Ovary (tissue), 10 donors: ENCODE measurements at regions of chr1 and their contacts with region 1.

Region 1: DNA sequence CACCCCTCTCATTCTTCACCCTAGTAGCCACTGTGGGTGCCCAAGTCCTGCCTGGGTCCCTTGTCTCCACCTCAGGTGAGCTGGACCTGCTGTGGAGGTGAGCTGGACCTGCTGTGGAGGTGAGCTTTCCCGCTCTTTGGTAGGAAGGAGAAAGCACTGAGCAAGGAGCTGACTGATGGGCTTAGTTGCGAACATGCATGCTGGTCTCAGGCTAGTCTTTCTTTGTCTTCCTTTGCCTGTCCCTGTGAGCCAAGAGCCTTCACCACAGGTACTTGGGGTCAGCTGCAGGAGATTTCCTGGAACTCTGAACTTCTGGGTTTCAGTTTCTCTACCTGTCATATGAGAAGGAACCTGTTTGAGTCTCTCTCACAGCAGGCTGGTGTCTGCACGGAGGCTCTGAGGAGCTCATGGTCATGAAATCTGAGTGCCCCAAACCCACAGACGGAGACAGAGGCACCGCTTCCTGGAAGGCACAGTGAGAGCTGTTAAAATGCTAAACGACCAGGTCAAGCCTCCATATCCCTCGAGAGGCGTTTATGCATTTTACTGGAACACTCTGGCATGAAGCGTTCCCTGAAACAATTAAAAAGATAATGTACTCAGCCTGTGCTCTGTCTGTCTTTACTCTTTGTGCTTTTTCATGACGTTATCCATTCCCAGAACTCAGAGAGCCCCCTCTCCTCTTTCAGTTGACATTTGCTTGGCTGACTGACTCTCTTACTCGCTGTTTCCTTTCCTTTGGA is 69.6 kb downstream of the RHOU start:
- DNase-seq: peak in 1 of 5 donors; percentile 52
- H3K4me3 ChIP-seq: no peak overlapping the region
- H3K27ac ChIP-seq: no peak overlapping the region
- H3K4me1 ChIP-seq: peaks cover 8% of the 10 kb centered on the region
- H3K27me3 ChIP-seq: no peaks in the 10 kb centered on the region
- CTCF ChIP-seq: no peak
- EP300 ChIP-seq: no peak
- POLR2A ChIP-seq: no peak

Region 2: DNA sequence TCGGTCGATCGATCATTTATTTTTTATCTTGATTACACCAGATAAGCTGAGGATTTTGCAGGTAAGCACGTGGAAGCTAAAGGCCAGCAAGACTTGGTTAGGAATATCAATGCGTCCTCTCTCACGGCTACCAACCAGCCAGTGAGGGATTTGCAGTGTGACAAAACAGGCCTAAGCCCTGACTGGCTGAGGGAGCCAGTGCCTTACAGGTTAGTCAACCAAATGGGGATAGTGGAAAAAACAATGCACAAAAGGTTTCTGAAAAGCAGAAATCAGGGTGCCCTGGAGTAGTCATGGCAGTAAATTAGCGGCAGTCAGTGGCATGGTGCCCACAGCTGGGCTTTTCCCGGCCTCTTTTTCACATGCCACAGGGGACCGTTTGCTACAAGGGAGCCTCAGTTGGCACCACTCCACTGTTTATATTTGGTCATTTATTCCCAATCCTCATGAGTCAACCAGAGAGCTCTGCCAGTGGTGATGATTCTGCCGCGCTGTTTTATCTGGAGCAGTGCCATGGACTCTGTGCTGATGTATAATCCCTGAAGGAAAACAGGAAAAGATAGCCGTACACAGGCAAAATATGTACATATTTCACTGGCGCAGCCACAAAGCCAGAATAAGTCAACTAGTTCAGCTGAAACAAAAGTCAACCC is 98.1 kb after region 1 on chr1:
- intact Hi-C with region 1: loop called in 1 of 4 experiments (anchors 10 kb)
- DNase-seq: peak; percentile 88 to 93 (median 89)
- H3K4me3 ChIP-seq: no peak overlapping the region
- H3K27ac ChIP-seq: peak overlapping the region; percentile 28 to 65
- H3K4me1 ChIP-seq: peaks cover 15% of the 10 kb centered on the region
- H3K27me3 ChIP-seq: no peaks in the 10 kb centered on the region
- CTCF ChIP-seq: no peak
- EP300 ChIP-seq: no peak
- POLR2A ChIP-seq: no peak

Region 3: DNA sequence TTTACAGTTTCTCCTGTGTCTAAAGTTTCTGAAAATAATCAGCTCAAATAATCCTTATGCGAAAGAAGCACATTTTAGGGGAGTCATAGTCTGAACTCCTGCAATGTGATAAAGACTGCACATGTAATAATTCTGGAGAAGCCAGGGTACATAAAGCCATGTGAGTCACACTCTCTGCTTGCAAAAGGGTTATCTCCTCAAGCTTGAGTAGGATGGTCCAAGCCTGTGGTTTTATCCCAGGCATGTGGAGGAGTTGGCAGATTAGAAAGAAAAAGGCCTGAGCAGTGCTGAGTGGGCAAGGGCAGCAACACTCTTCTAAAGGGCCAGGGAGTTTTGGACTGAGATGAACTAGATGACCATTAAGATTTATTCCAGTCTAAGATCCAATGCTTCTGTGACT is 150.8 kb after region 1 on chr1:
- intact Hi-C with region 1: loop called in 2 of 4 experiments (anchors 5 to 10 kb)
- DNase-seq: no peak
- H3K4me3 ChIP-seq: no peak overlapping the region
- H3K27ac ChIP-seq: no peak overlapping the region
- H3K4me1 ChIP-seq: no peaks in the 10 kb centered on the region
- H3K27me3 ChIP-seq: no peaks in the 10 kb centered on the region
- CTCF ChIP-seq: no peak
- EP300 ChIP-seq: no peak
- POLR2A ChIP-seq: no peak

Region 4: GRCh38 chr1:228964178-228965089 is 159.6 kb after region 1 on chr1:
- intact Hi-C with region 1: loop called in 2 of 4 experiments (anchors 5 to 10 kb)
- DNase-seq: peak; percentile 50 to 82 (median 65)
- H3K4me3 ChIP-seq: no peak overlapping the region
- H3K27ac ChIP-seq: peak overlapping the region; percentile 57 to 70
- H3K4me1 ChIP-seq: peaks cover 7% of the 10 kb centered on the region
- H3K27me3 ChIP-seq: no peaks in the 10 kb centered on the region
- CTCF ChIP-seq: no peak
- EP300 ChIP-seq: no peak
- POLR2A ChIP-seq: no peak

Region 5: GRCh38 chr1:229227298-229227919 is 422.6 kb after region 1 on chr1:
- intact Hi-C with region 1: loop called in 1 of 4 experiments (anchors 10 kb)
- DNase-seq: peak; percentile 82 to 92 (median 88)
- H3K4me3 ChIP-seq: no peak overlapping the region
- H3K27ac ChIP-seq: no peak overlapping the region
- H3K4me1 ChIP-seq: peaks cover 10% of the 10 kb centered on the region
- H3K27me3 ChIP-seq: no peaks in the 10 kb centered on the region
- CTCF ChIP-seq: peak; percentile 79 to 87 (median 84)
- EP300 ChIP-seq: no peak
- POLR2A ChIP-seq: no peak